CD8-positive, alpha-beta T cell (primary cell): ENCODE measurements at regions of chr11 and their contacts with region 1.

Region 1: GRCh38 chr11:77187776-77188632 is 60.0 kb downstream of the MYO7A start:
- DNase-seq: peak; percentile 30 to 81 (median 72)
- ATAC-seq: peak; percentile 71
- H3K4me3 ChIP-seq: no peak overlapping the region
- H3K4me3 Mint-ChIP-seq: no peak overlapping the region
- H3K27ac ChIP-seq: no peak overlapping the region
- H3K27ac Mint-ChIP-seq: no peak overlapping the region
- H3K4me1 ChIP-seq: no peaks in the 10 kb centered on the region
- H3K4me1 Mint-ChIP-seq: no peaks in the 10 kb centered on the region
- H3K27me3 ChIP-seq: no peaks in the 10 kb centered on the region
- H3K27me3 Mint-ChIP-seq: no peaks in the 10 kb centered on the region
- CTCF ChIP-seq: peak; percentile 71

Region 2: GRCh38 chr11:76918941-76919386 is 269.0 kb before region 1 on chr11:
- CTCF ChIA-PET with region 1: no interaction called
- POLR2A ChIA-PET with region 1: no interaction called
- intact Hi-C with region 1: no loop called
- DNase-seq: peak in 2 of 9 experiments; percentile 41 to 64
- ATAC-seq: no peak
- H3K4me3 ChIP-seq: no peak overlapping the region
- H3K4me3 Mint-ChIP-seq: no peak overlapping the region
- H3K27ac ChIP-seq: no peak overlapping the region
- H3K27ac Mint-ChIP-seq: no peak overlapping the region
- H3K4me1 ChIP-seq: peaks cover 7% of the 10 kb centered on the region
- H3K4me1 Mint-ChIP-seq: peaks cover 8% of the 10 kb centered on the region
- H3K27me3 ChIP-seq: no peaks in the 10 kb centered on the region
- H3K27me3 Mint-ChIP-seq: no peaks in the 10 kb centered on the region
- CTCF ChIP-seq: peak; percentile 53

Region 3: DNA sequence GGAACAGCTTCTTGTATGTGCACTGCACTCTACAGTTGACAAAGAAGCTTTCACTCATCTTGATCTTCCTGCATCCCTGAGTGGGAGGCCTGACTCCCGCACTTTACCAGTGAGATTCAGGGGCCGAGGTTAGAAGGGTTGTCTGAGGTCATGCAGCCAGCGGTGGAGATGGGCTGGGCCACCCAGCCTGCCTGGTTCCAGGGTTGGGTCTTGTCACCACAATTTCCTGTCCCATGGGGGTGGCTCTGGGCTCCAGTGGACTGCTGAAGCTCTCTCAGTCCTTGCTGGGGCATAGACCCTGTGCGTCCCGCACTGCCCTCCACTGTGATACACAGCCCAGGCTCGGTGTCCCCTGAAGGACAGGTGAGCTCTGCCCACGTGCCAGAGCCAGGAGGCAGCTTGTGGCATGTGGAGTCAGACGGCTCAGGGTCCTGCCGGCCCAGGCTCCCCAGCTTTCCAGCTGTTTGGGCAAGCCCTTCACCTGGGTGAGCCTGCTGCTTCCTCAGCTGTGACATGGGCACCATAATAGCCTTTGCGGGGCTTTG is 66.8 kb before region 1 on chr11:
- CTCF ChIA-PET with region 1: interaction called, 14 read pairs
- POLR2A ChIA-PET with region 1: no interaction called
- intact Hi-C with region 1: no loop called
- DNase-seq: no peak
- ATAC-seq: no peak
- H3K4me3 ChIP-seq: no peak overlapping the region
- H3K4me3 Mint-ChIP-seq: no peak overlapping the region
- H3K27ac ChIP-seq: no peak overlapping the region
- H3K27ac Mint-ChIP-seq: no peak overlapping the region
- H3K4me1 ChIP-seq: no peaks in the 10 kb centered on the region
- H3K4me1 Mint-ChIP-seq: no peaks in the 10 kb centered on the region
- H3K27me3 ChIP-seq: no peaks in the 10 kb centered on the region
- H3K27me3 Mint-ChIP-seq: no peaks in the 10 kb centered on the region
- CTCF ChIP-seq: no peak

Region 4: DNA sequence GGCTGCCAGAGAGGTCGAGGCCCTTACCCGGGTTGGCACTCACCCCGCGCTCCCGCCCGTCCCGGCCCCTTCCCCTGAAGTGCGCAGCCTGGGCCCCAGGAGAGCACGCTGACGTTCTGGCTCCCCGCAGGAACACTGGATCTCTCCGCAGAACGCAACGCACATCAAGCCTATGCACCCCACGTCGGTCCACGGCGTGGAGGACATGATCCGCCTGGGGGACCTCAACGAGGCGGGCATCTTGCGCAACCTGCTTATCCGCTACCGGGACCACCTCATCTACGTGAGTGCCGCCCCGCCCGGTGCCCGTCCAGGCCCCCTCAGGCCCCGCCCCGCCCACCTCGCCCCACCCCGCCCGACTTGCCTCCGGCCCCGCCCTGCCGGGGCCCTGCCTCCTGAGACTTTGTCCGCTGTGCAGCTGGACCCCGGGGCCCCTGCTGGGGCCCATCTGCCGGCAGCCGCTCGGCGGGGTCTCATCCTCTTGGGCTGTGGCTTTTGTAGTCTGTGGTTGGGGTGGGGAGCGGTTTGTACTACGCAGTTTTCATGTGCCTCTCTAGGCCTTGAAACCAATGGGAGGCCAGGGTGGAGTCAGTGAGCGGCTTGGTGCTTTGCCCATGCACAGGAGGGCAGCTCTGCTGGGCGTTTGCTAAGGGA is 40.2 kb before region 1 on chr11:
- CTCF ChIA-PET with region 1: interaction called, 6 read pairs
- POLR2A ChIA-PET with region 1: no interaction called
- intact Hi-C with region 1: loop called in 1 of 2 experiments (anchors 2 kb)
- DNase-seq: peak in 8 of 9 experiments; percentile 14 to 70 (median 52)
- ATAC-seq: peak; percentile 62
- H3K4me3 ChIP-seq: peak overlapping the region; percentile 32 to 33
- H3K4me3 Mint-ChIP-seq: peak overlapping the region; percentile 81
- H3K27ac ChIP-seq: no peak overlapping the region
- H3K27ac Mint-ChIP-seq: peak overlapping the region; percentile 81
- H3K4me1 ChIP-seq: peaks cover 32% of the 10 kb centered on the region
- H3K4me1 Mint-ChIP-seq: peaks cover 39% of the 10 kb centered on the region
- H3K27me3 ChIP-seq: no peaks in the 10 kb centered on the region
- H3K27me3 Mint-ChIP-seq: no peaks in the 10 kb centered on the region
- CTCF ChIP-seq: no peak

Region 5: GRCh38 chr11:77198440-77198849 is 10.4 kb after region 1 on chr11:
- CTCF ChIA-PET with region 1: interaction called, 19 read pairs
- POLR2A ChIA-PET with region 1: no interaction called
- intact Hi-C with region 1: no loop called
- DNase-seq: no peak
- ATAC-seq: no peak
- H3K4me3 ChIP-seq: no peak overlapping the region
- H3K4me3 Mint-ChIP-seq: no peak overlapping the region
- H3K27ac ChIP-seq: no peak overlapping the region
- H3K27ac Mint-ChIP-seq: no peak overlapping the region
- H3K4me1 ChIP-seq: no peaks in the 10 kb centered on the region
- H3K4me1 Mint-ChIP-seq: no peaks in the 10 kb centered on the region
- H3K27me3 ChIP-seq: no peaks in the 10 kb centered on the region
- H3K27me3 Mint-ChIP-seq: no peaks in the 10 kb centered on the region
- CTCF ChIP-seq: no peak

Region 6: GRCh38 chr11:77547863-77548551 is 360.0 kb after region 1 on chr11:
- CTCF ChIA-PET with region 1: interaction called, 12 read pairs
- POLR2A ChIA-PET with region 1: no interaction called
- intact Hi-C with region 1: loop called (anchors 1 kb)
- DNase-seq: peak in 6 of 9 experiments; percentile 4 to 74 (median 34)
- ATAC-seq: no peak
- H3K4me3 ChIP-seq: no peak overlapping the region
- H3K4me3 Mint-ChIP-seq: no peak overlapping the region
- H3K27ac ChIP-seq: no peak overlapping the region
- H3K27ac Mint-ChIP-seq: no peak overlapping the region
- H3K4me1 ChIP-seq: no peaks in the 10 kb centered on the region
- H3K4me1 Mint-ChIP-seq: peaks cover 6% of the 10 kb centered on the region
- H3K27me3 ChIP-seq: no peaks in the 10 kb centered on the region
- H3K27me3 Mint-ChIP-seq: no peaks in the 10 kb centered on the region
- CTCF ChIP-seq: peak; percentile 66

Region 7: DNA sequence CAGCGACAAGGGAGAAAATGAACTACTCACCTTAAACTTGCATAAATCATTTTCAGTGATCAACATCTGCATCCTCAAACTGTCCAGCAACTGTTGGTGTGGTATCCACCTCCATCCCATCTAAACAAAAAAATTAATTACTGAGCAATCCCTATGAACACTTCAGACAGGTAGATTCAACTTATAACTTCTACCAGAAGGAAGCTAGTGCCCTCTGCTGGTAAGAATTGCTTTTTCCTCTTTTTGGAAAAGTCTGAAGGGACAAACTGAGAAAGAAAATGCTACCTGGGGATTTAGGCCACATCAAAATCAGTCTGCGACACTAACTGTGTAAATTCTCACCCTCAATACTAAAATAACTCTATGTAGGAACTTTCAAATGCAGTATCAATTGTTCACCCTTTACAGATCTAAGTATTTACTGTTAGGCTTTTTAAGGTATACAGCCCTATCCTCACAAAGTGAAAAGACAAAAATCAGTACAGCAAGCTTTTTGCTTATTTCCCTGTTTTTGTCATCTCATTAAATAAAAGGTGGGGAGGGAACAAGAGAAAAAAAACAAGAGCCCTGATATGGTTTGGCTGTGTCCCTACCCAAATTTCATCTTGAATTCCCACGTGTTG is 431.7 kb after region 1 on chr11:
- CTCF ChIA-PET with region 1: no interaction called
- POLR2A ChIA-PET with region 1: no interaction called
- intact Hi-C with region 1: loop called (anchors 1 to 2 kb)
- DNase-seq: peak in 3 of 9 experiments; percentile 34 to 66 (median 54)
- ATAC-seq: no peak
- H3K4me3 ChIP-seq: no peak overlapping the region
- H3K4me3 Mint-ChIP-seq: no peak overlapping the region
- H3K27ac ChIP-seq: no peak overlapping the region
- H3K27ac Mint-ChIP-seq: no peak overlapping the region
- H3K4me1 ChIP-seq: no peaks in the 10 kb centered on the region
- H3K4me1 Mint-ChIP-seq: no peaks in the 10 kb centered on the region
- H3K27me3 ChIP-seq: no peaks in the 10 kb centered on the region
- H3K27me3 Mint-ChIP-seq: no peaks in the 10 kb centered on the region
- CTCF ChIP-seq: peak; percentile 77